ENCODE measurements at regions of chrX and their contacts with region 1.

Region 1: DNA sequence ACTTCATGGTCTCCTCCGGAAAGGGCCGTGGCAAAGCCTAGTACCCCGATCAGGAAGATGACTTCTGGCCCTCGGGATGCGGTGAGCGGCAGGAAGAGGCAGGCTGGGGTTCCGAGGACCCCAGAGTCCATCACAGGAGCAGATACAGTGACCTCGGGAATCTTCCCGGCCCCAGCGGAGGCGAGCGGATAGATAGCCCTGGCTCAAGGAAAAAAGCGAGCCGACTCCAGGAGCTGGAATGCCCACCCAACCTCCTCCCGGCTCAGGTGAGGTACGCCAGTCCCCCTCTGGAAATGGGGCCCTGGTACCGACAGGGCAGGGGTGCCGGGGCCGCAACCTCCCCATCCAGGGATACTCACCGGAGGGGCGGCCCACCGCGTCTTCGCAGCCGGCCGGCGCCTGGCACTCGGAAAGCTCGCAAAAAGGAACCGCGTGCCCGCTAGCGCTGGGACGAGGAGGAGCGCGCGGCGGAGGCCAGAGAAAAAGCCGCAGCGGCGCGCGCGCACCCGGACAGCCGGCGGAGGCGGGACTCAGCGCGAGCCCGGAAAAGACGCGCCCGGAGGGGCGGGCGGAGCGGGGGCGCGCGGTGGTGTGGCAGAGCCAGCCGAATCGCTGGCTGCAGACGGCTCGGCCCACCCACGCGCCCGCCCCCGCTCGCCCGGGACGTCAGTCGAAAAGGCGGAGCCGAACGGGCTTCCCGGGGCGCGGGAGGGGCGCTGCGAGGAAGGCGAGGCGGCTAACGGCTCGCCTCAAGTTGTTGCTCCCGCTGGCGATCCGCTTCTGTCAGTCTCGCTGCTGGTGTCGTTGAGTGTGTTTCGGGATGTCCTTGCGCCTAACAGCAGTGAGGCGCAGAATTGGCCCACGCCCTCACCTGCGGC is at the start of gene ACSL4:
- DNase-seq: peak; percentile 84
- H3K4me3 ChIP-seq: peak within 1 kb of the TSS; percentile 81 to 83 (median 82)
- H3K27ac ChIP-seq: peak within 1 kb of the TSS; percentile 75
- H3K4me1 ChIP-seq: peaks cover 7% of the 10 kb centered on the region
- H3K27me3 ChIP-seq: no peaks in the 10 kb centered on the region
- CTCF ChIP-seq: no peak
- total RNA-seq, gene ACSL4: 99.5 to 146 TPM

Region 2: DNA sequence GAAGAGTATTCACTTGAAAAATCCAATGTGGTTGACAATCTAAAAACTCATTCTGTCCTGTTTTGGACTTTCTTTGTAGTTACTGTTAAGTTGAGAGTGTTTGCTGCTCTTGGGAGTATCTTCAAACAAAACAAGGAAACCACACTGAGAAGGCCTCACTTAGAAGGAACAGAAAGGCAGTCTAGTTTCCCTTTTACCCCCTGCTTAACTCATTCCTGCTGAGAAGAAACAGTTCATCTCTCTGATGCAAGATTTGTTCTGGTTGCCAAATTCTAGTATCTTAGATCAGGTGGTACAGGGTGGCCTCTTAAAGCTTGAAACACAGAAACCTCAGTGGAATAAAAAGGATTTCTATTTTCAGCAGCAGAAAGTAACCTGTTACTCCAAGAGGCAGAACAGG is 292.5 kb before region 1 on chrX:
- CTCF ChIA-PET with region 1: no interaction called
- dilution Hi-C with region 1: no loop called
- in situ Hi-C with region 1: no loop called
- intact Hi-C with region 1: no loop called
- DNase-seq: no peak
- H3K4me3 ChIP-seq: no peak overlapping the region
- H3K27ac ChIP-seq: no peak overlapping the region
- H3K4me1 ChIP-seq: no peaks in the 10 kb centered on the region
- H3K27me3 ChIP-seq: peaks cover 11% of the 10 kb centered on the region
- CTCF ChIP-seq: no peak

Region 3: DNA sequence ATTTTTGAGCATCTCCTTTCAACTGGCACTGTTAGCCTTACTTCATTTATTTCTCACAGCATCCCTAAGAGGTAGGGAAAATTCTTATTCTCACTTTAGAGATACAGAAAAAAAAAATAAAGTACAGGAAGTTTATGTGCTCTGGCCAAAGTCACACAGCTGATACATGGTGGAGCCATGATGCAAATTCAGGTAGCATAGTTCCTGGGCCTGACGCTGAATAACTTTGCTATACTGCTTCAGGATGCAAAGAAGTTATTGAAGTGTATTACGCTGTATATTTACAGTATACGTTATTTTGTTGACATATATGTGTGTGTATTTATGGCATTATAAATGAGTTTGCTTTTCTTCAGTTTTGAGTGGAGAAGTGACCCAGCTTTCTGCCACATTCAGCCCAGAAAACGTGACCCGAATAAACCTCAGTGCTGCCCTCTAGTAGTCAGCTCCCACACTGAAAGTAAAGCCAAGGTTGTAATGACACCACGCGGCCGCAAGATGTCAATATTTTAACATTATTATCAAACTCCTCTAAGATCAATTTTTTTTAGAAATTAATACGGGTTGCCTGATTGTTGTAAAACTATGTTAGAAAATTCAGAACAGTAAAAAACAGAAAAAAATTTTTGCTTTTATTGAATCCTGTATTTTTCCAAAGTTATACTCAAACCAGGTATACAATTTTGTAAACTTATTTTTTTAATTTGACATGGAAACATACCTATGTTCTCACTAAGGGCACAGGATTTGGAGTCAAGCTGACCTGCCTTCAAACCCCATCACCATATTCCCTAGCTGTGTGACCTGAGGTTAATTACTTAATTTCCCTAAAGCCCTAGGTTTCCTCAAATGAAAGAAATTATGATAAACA is 247.3 kb before region 1 on chrX:
- CTCF ChIA-PET with region 1: no interaction called
- dilution Hi-C with region 1: no loop called
- in situ Hi-C with region 1: no loop called
- intact Hi-C with region 1: no loop called
- DNase-seq: peak; percentile 55
- H3K4me3 ChIP-seq: no peak overlapping the region
- H3K27ac ChIP-seq: no peak overlapping the region
- H3K4me1 ChIP-seq: no peaks in the 10 kb centered on the region
- H3K27me3 ChIP-seq: peaks cover 11% of the 10 kb centered on the region
- CTCF ChIP-seq: peak; percentile 95 to 96

Region 4: DNA sequence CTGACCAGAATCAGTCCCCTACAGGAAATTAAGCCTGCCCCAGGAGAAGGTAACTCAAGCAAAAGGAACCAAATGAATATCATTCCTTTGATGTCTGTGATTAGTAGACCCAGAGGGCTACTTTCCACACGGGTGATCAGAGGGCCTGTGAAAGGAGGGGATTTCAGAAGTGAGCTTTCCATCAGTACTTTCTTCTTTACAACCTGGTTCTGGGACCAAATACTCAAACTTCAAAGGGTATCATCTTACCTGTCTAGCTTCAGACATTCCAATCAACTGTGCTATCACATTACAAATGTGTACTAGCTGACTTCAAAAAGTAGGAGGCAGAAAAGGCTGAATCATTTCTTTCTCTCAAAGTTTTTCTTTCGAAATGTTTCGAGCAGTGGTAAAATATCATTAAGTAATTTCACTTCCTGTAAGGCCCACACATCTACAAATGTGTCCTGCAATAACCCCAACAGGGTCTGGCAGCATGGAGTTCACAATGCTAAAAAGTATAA is 23.8 kb before region 1 on chrX:
- CTCF ChIA-PET with region 1: interaction called, 63 read pairs
- dilution Hi-C with region 1: no loop called
- in situ Hi-C with region 1: no loop called
- intact Hi-C with region 1: no loop called
- DNase-seq: peak; percentile 66
- H3K4me3 ChIP-seq: no peak overlapping the region
- H3K27ac ChIP-seq: no peak overlapping the region
- H3K4me1 ChIP-seq: peaks cover 20% of the 10 kb centered on the region
- H3K27me3 ChIP-seq: no peaks in the 10 kb centered on the region
- CTCF ChIP-seq: no peak

Region 5: DNA sequence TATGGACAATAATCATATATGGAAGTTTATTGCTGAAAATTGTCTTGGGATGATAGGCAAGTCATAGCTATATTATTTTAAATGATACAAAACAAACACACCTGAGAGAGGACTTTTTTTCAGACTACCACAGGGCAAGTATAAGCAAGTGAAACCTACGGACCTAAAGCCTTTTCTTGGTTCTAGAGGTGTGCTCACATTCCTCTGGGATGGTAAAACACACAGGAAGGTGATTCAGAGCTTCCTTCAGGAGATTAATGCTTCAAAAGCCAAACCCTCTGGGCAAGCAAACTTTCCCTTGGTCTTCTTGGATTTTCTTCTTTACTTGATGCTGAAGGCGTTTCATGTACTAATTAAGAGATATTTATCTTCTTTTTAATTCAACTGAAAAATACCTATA is 60.2 kb after region 1 on chrX:
- CTCF ChIA-PET with region 1: no interaction called
- dilution Hi-C with region 1: no loop called
- in situ Hi-C with region 1: no loop called
- intact Hi-C with region 1: loop called (anchors 2 kb)
- DNase-seq: peak; percentile 91
- H3K4me3 ChIP-seq: no peak overlapping the region
- H3K27ac ChIP-seq: peak overlapping the region; percentile 20
- H3K4me1 ChIP-seq: peaks cover 15% of the 10 kb centered on the region
- H3K27me3 ChIP-seq: no peaks in the 10 kb centered on the region
- CTCF ChIP-seq: no peak

Region 6: DNA sequence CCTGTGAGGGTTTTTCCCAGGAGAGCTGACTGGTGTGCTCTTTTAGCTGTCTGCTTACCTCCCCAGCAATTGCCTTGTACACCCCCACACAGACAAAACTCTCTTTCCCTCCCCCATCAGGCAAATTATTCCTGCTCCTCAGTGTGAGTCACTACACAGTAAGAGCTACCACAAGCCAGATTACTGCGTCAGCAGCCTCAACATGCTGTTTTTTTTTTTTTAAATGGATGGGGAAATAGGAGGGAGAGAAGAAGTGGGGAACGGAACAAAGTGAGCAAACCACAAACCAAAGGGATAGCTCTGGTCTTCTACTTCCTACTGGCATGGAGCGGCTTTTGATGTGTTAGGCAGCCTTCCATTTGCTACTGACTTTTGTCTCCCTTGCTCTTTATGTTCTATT is 107.6 kb after region 1 on chrX:
- CTCF ChIA-PET with region 1: interaction called, 4 read pairs
- dilution Hi-C with region 1: no loop called
- in situ Hi-C with region 1: loop called in 1 of 2 experiments (anchors 10 kb)
- intact Hi-C with region 1: loop called (anchors 2 kb)
- DNase-seq: peak; percentile 92
- H3K4me3 ChIP-seq: no peak overlapping the region
- H3K27ac ChIP-seq: peak overlapping the region; percentile 71
- H3K4me1 ChIP-seq: peaks cover 26% of the 10 kb centered on the region
- H3K27me3 ChIP-seq: peaks cover 2% of the 10 kb centered on the region
- CTCF ChIP-seq: no peak

Region 7: DNA sequence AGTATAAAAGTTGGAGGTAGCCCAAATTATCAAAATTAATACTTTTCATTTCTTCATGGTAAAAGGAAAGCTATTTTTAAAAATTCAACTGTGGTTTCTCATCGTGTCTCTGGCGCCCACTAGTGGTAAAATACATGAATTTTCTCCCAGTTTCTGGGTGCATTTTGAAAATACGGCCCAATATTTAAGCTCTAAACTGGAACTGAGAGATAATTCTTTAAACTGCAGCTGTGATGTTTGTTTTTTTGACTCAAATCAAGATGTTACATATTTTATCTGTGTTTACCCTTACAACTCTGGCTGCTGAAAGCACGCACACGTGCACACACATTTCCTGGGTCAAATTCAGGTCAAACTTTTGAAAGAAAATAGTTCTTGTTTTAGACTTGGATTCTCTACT is 124.0 kb after region 1 on chrX:
- CTCF ChIA-PET with region 1: no interaction called
- dilution Hi-C with region 1: no loop called
- in situ Hi-C with region 1: no loop called
- intact Hi-C with region 1: loop called (anchors 2 kb)
- DNase-seq: no peak
- H3K4me3 ChIP-seq: no peak overlapping the region
- H3K27ac ChIP-seq: no peak overlapping the region
- H3K4me1 ChIP-seq: peaks cover 8% of the 10 kb centered on the region
- H3K27me3 ChIP-seq: no peaks in the 10 kb centered on the region
- CTCF ChIP-seq: peak; percentile 78 to 92

Region 8: GRCh38 chrX:109920325-109920724 is 187.3 kb after region 1 on chrX:
- CTCF ChIA-PET with region 1: no interaction called
- dilution Hi-C with region 1: no loop called
- in situ Hi-C with region 1: no loop called
- intact Hi-C with region 1: no loop called
- DNase-seq: no peak
- H3K4me3 ChIP-seq: no peak overlapping the region
- H3K27ac ChIP-seq: no peak overlapping the region
- H3K4me1 ChIP-seq: no peaks in the 10 kb centered on the region
- H3K27me3 ChIP-seq: peaks cover 6% of the 10 kb centered on the region
- CTCF ChIP-seq: no peak

Measured in mammary epithelial cell (primary cell).